ENCODE measurements at regions of chr1 and their contacts with region 1.

Region 1: GRCh38 chr1:212455803-212456528 is 23.2 kb downstream of the NENF start:
- DNase-seq: peak; percentile 67
- ATAC-seq: peak; percentile 90
- H3K4me3 ChIP-seq: no peak overlapping the region
- H3K27ac ChIP-seq: no peak overlapping the region
- H3K4me1 ChIP-seq: peaks cover 0 to 6% of the 10 kb centered on the region in 2 experiments; a peak in 1 of 4 replicates
- H3K27me3 ChIP-seq: no peaks in the 10 kb centered on the region
- CTCF ChIP-seq: peak; percentile 92 to 98 (median 95)
- POLR2A ChIP-seq: no peak
- RAD21 ChIP-seq: peak; percentile 99

Region 2: GRCh38 chr1:210786546-210786945 is 1669.4 kb before region 1 on chr1:
- CTCF ChIA-PET with region 1: no interaction called
- POLR2A ChIA-PET with region 1: no interaction called
- RAD21 ChIA-PET with region 1: no interaction called
- intact Hi-C with region 1: no loop called
- DNase-seq: no peak
- ATAC-seq: no peak
- H3K4me3 ChIP-seq: no peak overlapping the region
- H3K27ac ChIP-seq: no peak overlapping the region
- H3K4me1 ChIP-seq: no peaks in the 10 kb centered on the region
- H3K27me3 ChIP-seq: peaks cover 18% of the 10 kb centered on the region
- CTCF ChIP-seq: no peak
- POLR2A ChIP-seq: no peak
- RAD21 ChIP-seq: no peak

Region 3: GRCh38 chr1:211680752-211681327 is 775.1 kb before region 1 on chr1:
- CTCF ChIA-PET with region 1: interaction called, 70 read pairs
- POLR2A ChIA-PET with region 1: no interaction called
- RAD21 ChIA-PET with region 1: interaction called, 6 to 17 read pairs
- intact Hi-C with region 1: loop called (anchors 1 kb)
- DNase-seq: peak; percentile 85
- ATAC-seq: peak; percentile 88
- H3K4me3 ChIP-seq: no peak overlapping the region
- H3K27ac ChIP-seq: no peak overlapping the region
- H3K4me1 ChIP-seq: peaks cover 0 to 13% of the 10 kb centered on the region in 2 experiments; a peak in 3 of 4 replicates
- H3K27me3 ChIP-seq: no peaks in the 10 kb centered on the region
- CTCF ChIP-seq: peak; percentile 64 to 94 (median 75)
- POLR2A ChIP-seq: no peak
- RAD21 ChIP-seq: peak; percentile 97

Region 4: DNA sequence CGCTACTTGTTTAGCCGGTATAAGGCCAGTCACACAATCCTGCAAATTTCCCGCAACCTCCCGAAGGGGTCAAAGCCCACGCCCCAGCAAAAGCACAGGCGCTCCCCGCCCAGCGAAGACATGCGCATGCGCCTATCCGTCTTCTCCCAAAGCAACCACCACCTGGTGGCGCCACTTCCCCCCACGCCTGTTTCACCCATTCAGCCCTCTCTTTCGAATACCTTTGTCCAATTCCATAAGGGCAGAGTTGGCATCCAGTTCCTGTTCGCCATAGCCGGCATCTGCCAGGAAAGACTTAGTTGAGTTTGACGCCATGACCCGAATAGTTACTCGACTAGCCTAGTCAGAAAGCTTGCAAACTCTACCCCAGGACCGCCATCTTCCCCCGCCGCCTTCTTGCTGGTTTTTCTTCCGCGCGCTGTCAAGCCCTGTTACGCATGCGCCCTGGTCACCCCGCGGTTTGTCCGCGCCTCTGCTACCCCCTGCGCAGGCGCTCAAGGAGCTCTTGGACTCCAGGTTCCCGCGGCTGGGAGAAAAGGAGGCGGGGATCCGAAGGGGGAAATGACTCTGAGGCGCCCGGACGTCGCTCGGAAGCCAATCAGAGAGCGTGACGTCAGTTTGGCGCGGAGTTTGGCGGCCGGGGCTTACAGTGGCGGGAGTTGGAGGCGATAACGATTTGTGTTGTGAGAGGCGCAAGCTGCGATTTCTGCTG is 420.7 kb before region 1 on chr1 and contains the starts of genes DTL and INTS7:
- CTCF ChIA-PET with region 1: interaction called, 42 read pairs
- POLR2A ChIA-PET with region 1: no interaction called
- RAD21 ChIA-PET with region 1: interaction called in 1 of 2 experiments, 10 read pairs
- intact Hi-C with region 1: no loop called
- DNase-seq: peak; percentile 98
- ATAC-seq: peak; percentile 88
- H3K4me3 ChIP-seq: peak within 1 kb of the TSS; percentile 88
- H3K27ac ChIP-seq: peak within 1 kb of the TSS; percentile 71
- H3K4me1 ChIP-seq: peaks cover 18 to 41% of the 10 kb centered on the region in 2 experiments
- H3K27me3 ChIP-seq: no peaks in the 10 kb centered on the region
- CTCF ChIP-seq: peak in 2 of 3 experiments; percentile 63 to 83; a peak in 5 of 6 replicates
- POLR2A ChIP-seq: peak; percentile 86
- RAD21 ChIP-seq: peak; percentile 25; the same call in 1 of the 2 replicates
- total RNA-seq, gene DTL: 41.0 TPM
- total RNA-seq, gene INTS7: 21.7 TPM

Region 5: GRCh38 chr1:212070720-212071302 is 385.2 kb before region 1 on chr1:
- CTCF ChIA-PET with region 1: interaction called, 122 read pairs
- POLR2A ChIA-PET with region 1: interaction called, 5 read pairs
- RAD21 ChIA-PET with region 1: interaction called, 8 to 21 read pairs
- intact Hi-C with region 1: loop called (anchors 1 kb)
- DNase-seq: peak; percentile 13
- ATAC-seq: peak; percentile 66
- H3K4me3 ChIP-seq: no peak overlapping the region
- H3K27ac ChIP-seq: no peak overlapping the region
- H3K4me1 ChIP-seq: no peaks in the 10 kb centered on the region
- H3K27me3 ChIP-seq: no peaks in the 10 kb centered on the region
- CTCF ChIP-seq: peak; percentile 56 to 87 (median 73)
- POLR2A ChIP-seq: no peak
- RAD21 ChIP-seq: peak; percentile 94

Region 6: GRCh38 chr1:212147581-212148033 is 308.4 kb before region 1 on chr1:
- CTCF ChIA-PET with region 1: no interaction called
- POLR2A ChIA-PET with region 1: no interaction called
- RAD21 ChIA-PET with region 1: no interaction called
- intact Hi-C with region 1: no loop called
- DNase-seq: no peak
- ATAC-seq: no peak
- H3K4me3 ChIP-seq: no peak overlapping the region
- H3K27ac ChIP-seq: no peak overlapping the region
- H3K4me1 ChIP-seq: no peaks in the 10 kb centered on the region
- H3K27me3 ChIP-seq: no peaks in the 10 kb centered on the region
- CTCF ChIP-seq: no peak
- POLR2A ChIP-seq: no peak
- RAD21 ChIP-seq: no peak

Region 7: GRCh38 chr1:212368073-212368484 is 87.9 kb before region 1 on chr1:
- CTCF ChIA-PET with region 1: interaction called, 10 read pairs
- POLR2A ChIA-PET with region 1: no interaction called
- RAD21 ChIA-PET with region 1: no interaction called
- intact Hi-C with region 1: loop called (anchors 5 kb)
- DNase-seq: peak; percentile 66
- ATAC-seq: peak; percentile 98
- H3K4me3 ChIP-seq: no peak overlapping the region
- H3K27ac ChIP-seq: no peak overlapping the region
- H3K4me1 ChIP-seq: no peaks in the 10 kb centered on the region
- H3K27me3 ChIP-seq: no peaks in the 10 kb centered on the region
- CTCF ChIP-seq: peak; percentile 76 to 96 (median 92); a peak in 5 of 6 replicates
- POLR2A ChIP-seq: no peak
- RAD21 ChIP-seq: peak; percentile 92

Region 8: DNA sequence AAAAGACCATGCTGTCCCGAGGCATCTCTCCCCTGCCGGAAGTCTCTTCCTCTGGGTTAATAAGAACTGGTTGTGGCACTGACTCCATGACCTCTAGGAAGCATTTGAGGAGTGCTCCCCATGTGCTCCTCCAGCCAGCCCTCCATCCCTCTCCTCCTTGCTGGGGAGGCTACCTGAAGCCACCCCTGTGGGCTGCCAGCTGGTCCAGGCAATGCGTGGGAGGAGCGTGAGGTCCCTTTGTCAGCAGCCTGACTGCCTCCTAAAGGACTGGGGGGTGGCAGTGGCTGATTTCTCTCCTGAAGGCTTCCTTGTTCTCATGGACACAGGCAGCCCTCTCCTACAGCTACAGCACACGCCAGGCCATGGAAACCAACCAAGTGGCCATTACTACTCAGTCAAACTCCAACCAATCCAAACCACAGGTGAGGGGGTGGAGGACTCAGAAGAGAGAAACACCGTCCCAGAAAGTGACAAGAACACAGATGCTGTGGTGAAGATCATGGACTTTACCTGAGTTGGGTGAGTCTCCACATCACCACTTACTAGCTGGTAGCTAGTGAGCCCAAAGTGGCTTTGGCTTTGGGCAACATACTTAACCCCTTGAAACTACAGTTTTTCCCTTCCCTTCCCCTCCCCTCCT is 12.0 kb after region 1 on chr1:
- CTCF ChIA-PET with region 1: interaction called, 23 read pairs
- POLR2A ChIA-PET with region 1: no interaction called
- RAD21 ChIA-PET with region 1: no interaction called
- intact Hi-C with region 1: no loop called
- DNase-seq: no peak
- ATAC-seq: peak; percentile 25; the same call in 1 of the 2 replicates
- H3K4me3 ChIP-seq: no peak overlapping the region
- H3K27ac ChIP-seq: peak overlapping the region; percentile 30; the same call in 1 of the 2 replicates
- H3K4me1 ChIP-seq: peaks cover 22 to 42% of the 10 kb centered on the region in 2 experiments
- H3K27me3 ChIP-seq: no peaks in the 10 kb centered on the region
- CTCF ChIP-seq: no peak
- POLR2A ChIP-seq: no peak
- RAD21 ChIP-seq: no peak

Region 9: GRCh38 chr1:212556822-212557549 is 101.0 kb after region 1 on chr1:
- CTCF ChIA-PET with region 1: no interaction called
- POLR2A ChIA-PET with region 1: no interaction called
- RAD21 ChIA-PET with region 1: no interaction called
- intact Hi-C with region 1: no loop called
- DNase-seq: no peak
- ATAC-seq: no peak
- H3K4me3 ChIP-seq: no peak overlapping the region
- H3K27ac ChIP-seq: no peak overlapping the region
- H3K4me1 ChIP-seq: peaks cover 14 to 41% of the 10 kb centered on the region in 2 experiments
- H3K27me3 ChIP-seq: no peaks in the 10 kb centered on the region
- CTCF ChIP-seq: no peak
- POLR2A ChIP-seq: no peak
- RAD21 ChIP-seq: no peak

Region 10: DNA sequence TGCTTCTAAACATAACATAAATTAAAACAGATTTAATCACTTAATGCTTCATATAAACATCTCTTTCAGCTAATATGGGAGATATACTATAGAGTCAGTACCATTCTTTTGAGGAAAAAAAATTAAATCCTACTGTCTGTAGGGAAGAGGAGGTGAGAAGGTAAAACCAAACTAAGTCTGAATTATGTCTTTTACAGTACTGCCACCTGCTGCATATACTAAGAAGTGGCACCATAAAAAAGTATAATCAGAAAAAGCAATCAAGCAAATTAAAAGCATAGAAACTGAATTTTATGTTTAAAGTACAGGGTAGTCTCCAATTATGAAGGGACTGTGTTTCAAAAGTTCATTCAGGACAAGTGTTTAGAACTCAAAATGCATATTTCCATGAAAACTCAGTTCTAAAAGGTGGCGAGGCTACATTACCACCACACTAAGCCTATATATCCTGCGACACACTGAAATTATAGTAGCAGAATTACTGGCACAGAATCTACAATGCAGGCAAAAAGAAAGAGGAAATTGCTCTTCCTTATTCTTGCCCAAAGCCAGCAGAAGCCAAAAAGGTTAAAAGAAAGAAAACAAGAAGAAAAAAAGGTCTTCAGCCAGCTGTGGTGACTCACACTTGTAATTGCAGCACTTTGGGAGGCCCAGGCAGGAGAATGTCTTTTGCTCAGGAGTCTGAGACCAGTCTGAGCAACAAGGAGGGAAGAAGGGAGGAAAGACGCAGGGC is 326.6 kb after region 1 on chr1:
- CTCF ChIA-PET with region 1: interaction called, 8 read pairs
- POLR2A ChIA-PET with region 1: no interaction called
- RAD21 ChIA-PET with region 1: interaction called in 1 of 2 experiments, 5 read pairs
- intact Hi-C with region 1: loop called (anchors 2 kb)
- DNase-seq: no peak
- ATAC-seq: peak; percentile 68; the same call in 1 of the 2 replicates
- H3K4me3 ChIP-seq: no peak overlapping the region
- H3K27ac ChIP-seq: no peak overlapping the region
- H3K4me1 ChIP-seq: no peaks in the 10 kb centered on the region
- H3K27me3 ChIP-seq: no peaks in the 10 kb centered on the region
- CTCF ChIP-seq: peak; percentile 50 to 70 (median 64); a peak in 5 of 6 replicates
- POLR2A ChIP-seq: no peak
- RAD21 ChIP-seq: peak; percentile 75

Region 11: DNA sequence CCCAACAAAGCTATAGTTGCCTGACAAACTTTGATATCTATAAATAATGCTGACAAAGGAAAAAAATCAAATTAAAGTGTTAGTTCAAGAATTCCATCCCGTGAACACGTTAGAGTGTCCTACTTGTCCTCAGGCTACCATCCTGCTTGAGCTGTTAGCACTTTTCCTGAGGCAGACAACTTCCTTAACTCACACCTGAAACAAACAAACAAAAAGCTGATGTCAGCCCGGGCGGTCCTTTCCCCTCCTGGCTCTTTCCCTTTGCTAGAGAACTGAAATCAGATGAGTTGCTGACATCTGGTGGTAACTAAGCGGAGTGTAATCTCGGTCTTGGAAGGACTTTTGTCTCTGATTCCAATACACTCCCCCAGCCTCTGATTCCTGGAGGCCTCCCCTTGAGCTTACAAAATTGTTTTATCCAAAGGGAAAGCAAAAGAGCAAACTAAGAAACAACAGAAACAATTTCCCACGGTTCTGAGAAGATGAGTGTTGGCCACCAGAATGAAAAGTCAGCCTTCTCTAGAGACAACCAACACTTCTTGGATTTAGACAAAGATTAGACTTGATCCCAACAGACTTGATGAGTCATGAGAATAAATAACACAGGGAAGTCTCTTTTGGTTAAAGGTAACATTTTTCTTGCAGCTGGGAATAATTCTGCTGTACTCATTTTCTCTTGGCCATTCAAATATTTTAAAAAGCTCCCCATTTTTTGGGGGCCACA is 1667.3 kb after region 1 on chr1:
- CTCF ChIA-PET with region 1: no interaction called
- POLR2A ChIA-PET with region 1: no interaction called
- RAD21 ChIA-PET with region 1: no interaction called
- intact Hi-C with region 1: no loop called
- DNase-seq: peak; percentile 51
- ATAC-seq: peak; percentile 97
- H3K4me3 ChIP-seq: no peak overlapping the region
- H3K27ac ChIP-seq: no peak overlapping the region
- H3K4me1 ChIP-seq: no peaks in the 10 kb centered on the region; a peak in 1 of 4 replicates
- H3K27me3 ChIP-seq: no peaks in the 10 kb centered on the region
- CTCF ChIP-seq: peak; percentile 60 to 63 (median 62); a peak in 5 of 6 replicates
- POLR2A ChIP-seq: no peak
- RAD21 ChIP-seq: peak; percentile 97